Breast epithelium (tissue), 4 donors: ENCODE measurements at regions of chr15 and their contacts with region 1.

Region 1: GRCh38 chr15:36671017-36671416 is 91.6 kb downstream of the CDIN1 start:
- DNase-seq: no peak
- H3K4me3 ChIP-seq: no peak overlapping the region
- H3K27ac ChIP-seq: no peak overlapping the region
- H3K4me1 ChIP-seq: no peaks in the 10 kb centered on the region
- H3K27me3 ChIP-seq: no peaks in the 10 kb centered on the region
- CTCF ChIP-seq: no peak
- POLR2A ChIP-seq: no peak

Region 2: DNA sequence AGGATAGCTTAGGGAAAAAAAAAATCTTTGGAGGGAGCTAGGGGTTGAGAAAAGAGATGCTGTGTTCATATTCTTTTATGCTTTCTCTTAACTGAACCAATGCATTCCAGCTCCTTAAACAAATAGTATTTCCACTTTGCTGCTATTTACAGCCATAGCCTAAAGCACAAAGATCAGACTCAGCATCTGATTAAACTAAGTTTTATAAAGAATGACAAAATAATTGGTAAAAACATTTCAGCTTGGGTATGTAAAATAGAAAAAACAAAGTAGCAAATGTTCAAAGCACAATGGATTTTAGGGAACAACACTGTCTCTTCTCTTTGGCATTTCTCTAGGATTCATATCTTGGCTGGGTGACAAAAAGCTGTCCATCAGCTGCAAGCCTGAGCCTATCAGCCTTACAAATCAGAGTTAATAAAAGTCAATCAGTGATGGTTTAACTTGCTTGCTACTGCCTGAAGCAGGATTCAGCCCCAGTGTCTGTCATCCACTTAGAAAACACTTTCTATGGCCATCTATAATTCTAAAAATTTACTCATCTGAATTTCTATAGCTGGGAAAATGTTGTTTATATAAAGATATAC is 323.7 kb before region 1 on chr15:
- intact Hi-C with region 1: loop called (anchors 10 kb)
- DNase-seq: no peak
- H3K4me3 ChIP-seq: no peak overlapping the region
- H3K27ac ChIP-seq: no peak overlapping the region
- H3K4me1 ChIP-seq: no peaks in the 10 kb centered on the region
- H3K27me3 ChIP-seq: no peaks in the 10 kb centered on the region
- CTCF ChIP-seq: no peak
- POLR2A ChIP-seq: no peak